Dorsolateral prefrontal cortex (tissue), 120 donors: ENCODE measurements at regions of chr10 and their contacts with region 1.

Region 1: GRCh38 chr10:95561182-95562075 is at the start of gene SORBS1:
- DNase-seq: peak; percentile 94 to 98 (median 97)
- H3K4me3 ChIP-seq: peak within 1 kb of the TSS; percentile 47 to 97 (median 89)
- H3K27ac ChIP-seq: peak within 1 kb of the TSS; percentile 58 to 96 (median 90)
- H3K27me3 ChIP-seq: no peaks in the 10 kb centered on the region
- CTCF ChIP-seq: peak in 20 of 56 donors; percentile 9 to 42 (median 23)
- total RNA-seq, gene SORBS1: 191 to 480 (median 308) TPM

Region 2: GRCh38 chr10:95430231-95430951 is 131.0 kb before region 1 on chr10:
- intact Hi-C with region 1: loop called (anchors 2 to 10 kb)
- DNase-seq: peak in 1 of 10 donors; percentile 67
- H3K4me3 ChIP-seq: no peak overlapping the region
- H3K27ac ChIP-seq: peak overlapping the region in 42 of 59 donors; percentile 1 to 87 (median 60)
- H3K27me3 ChIP-seq: peaks cover 0 to 7% (median 0%) of the 10 kb centered on the region in 45 donors
- CTCF ChIP-seq: peak; percentile 89 to 99 (median 96)

Region 3: DNA sequence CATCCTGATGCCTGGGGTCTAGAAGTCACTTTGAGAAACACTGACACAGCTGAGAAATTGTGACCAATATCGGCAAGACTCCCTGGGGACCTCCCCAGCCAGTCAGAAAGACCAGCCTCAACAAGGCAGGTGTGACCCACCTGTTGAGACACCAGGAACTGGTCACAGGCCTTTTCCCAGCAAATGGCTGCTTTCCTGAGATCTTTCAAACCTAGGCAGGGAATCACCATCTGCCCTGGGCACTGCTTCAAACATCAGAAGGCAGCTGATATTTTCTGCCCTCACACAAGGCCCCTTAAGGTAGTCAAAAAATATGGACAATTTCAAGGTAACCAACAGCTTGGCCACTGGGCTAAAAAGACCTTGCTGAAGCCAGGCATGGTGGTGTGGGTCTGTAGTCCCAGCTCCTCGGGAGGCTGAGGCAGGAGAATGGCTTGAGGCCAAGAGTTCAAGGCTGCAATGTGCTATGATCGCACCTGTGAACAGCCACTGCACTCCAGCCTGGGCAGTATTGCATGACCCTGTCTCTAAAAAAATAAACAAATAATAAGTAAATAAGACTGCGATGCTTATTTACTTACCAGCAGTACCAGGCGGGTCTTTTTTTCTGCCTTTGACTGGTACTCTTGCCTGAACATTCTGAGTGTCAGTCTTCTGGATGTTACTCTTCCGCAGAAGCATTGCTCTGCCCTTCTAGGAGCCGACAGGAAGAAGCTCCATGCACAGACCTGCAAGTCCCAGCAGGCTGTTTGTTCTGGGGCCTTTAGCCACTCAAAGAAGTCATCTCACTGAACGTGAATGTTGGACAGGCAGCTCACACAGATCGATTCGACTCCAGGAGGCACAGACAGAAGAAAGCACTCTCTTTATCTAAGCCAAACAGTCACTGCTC is 60.0 kb before region 1 on chr10:
- intact Hi-C with region 1: no loop called
- DNase-seq: peak in 1 of 10 donors; percentile 34
- H3K4me3 ChIP-seq: peak overlapping the region in 4 of 59 donors; percentile 2 to 12 (median 8)
- H3K27ac ChIP-seq: peak overlapping the region in 57 of 59 donors; percentile 1 to 94 (median 67)
- H3K27me3 ChIP-seq: no peaks in the 10 kb centered on the region
- CTCF ChIP-seq: no peak

Region 4: GRCh38 chr10:95513941-95514392 is 47.5 kb before region 1 on chr10:
- intact Hi-C with region 1: loop called in 1 of 2 experiments (anchors 5 kb)
- DNase-seq: peak in 9 of 10 donors; percentile 40 to 83 (median 72)
- H3K4me3 ChIP-seq: peak overlapping the region in 11 of 59 donors; percentile 2 to 31 (median 15)
- H3K27ac ChIP-seq: peak overlapping the region; percentile 42 to 94 (median 81)
- H3K27me3 ChIP-seq: no peaks in the 10 kb centered on the region
- CTCF ChIP-seq: peak in 3 of 56 donors; percentile 9 to 41 (median 13)

Region 5: DNA sequence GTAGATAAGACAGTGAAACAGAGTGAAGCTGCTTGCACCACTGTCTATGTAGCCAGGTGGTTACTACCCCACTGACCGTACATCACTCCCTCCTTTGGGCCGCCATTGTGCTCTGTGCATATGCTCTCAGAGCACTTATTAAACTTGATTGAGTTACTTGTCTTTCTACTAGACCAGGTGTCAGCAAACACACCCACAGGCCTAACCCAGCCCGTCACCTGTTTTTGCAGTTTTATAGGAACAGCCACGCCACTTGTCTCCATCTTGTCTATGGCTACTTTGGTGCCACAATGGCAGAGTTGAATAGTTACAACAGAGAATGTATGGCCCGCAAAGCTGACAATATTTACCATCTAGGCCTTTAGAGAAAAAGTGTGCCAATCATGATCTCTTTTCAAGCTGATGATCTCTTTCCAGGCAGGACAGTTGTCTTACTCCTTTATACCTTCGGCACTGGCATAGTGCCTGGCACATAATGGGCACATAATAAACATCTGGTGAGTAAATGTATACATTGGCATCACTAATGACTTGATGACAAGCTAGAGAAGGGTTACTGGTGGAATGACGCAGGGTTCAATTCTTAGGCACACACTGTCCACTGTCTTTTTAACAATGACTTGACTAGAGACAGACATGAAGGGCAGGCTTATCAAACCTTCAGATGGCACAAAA is 36.9 kb before region 1 on chr10:
- intact Hi-C with region 1: loop called in 1 of 2 experiments (anchors 5 kb)
- DNase-seq: no peak
- H3K4me3 ChIP-seq: no peak overlapping the region
- H3K27ac ChIP-seq: peak overlapping the region in 21 of 59 donors; percentile 10 to 90 (median 30)
- H3K27me3 ChIP-seq: no peaks in the 10 kb centered on the region
- CTCF ChIP-seq: no peak

Region 6: GRCh38 chr10:95572131-95572820 is 10.8 kb after region 1 on chr10:
- intact Hi-C with region 1: no loop called
- DNase-seq: no peak
- H3K4me3 ChIP-seq: peak overlapping the region in 35 of 59 donors; percentile 1 to 52 (median 27)
- H3K27ac ChIP-seq: peak overlapping the region in 55 of 59 donors; percentile 3 to 88 (median 65)
- H3K27me3 ChIP-seq: peaks cover 0 to 3% (median 0%) of the 10 kb centered on the region in 45 donors
- CTCF ChIP-seq: no peak

Region 7: DNA sequence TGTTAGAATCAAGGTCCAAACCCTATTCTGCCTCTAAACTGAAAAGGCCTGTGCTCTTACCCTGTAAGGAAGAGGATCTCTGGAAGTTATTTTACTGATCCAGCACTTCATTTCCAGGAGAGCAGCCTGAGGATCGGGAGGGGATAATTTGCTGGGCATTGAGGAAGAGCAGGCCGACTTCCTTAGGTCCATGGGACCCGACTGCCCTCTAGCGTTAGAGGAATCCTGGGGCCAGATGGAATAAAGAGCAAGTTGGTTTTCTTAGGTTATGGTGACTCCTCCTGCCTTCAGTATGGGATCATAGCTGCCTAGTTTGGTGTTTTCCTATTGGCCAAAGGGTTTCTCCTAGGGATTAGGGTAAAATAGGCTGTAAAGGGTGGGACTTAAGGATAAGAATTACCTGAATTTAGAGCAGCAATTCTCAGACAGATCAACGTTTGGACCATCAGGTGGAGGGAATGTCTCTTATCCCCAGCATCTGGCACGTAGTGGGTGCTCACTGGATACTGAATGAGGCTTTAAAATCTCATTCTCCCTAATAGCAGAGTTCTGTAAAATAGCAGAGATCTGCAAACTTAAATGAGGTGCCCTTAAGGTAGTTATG is 39.8 kb after region 1 on chr10:
- intact Hi-C with region 1: loop called (anchors 5 kb)
- DNase-seq: peak; percentile 47 to 86 (median 74)
- H3K4me3 ChIP-seq: no peak overlapping the region
- H3K27ac ChIP-seq: peak overlapping the region in 1 of 59 donors; percentile 5
- H3K27me3 ChIP-seq: peaks cover 0 to 8% (median 0%) of the 10 kb centered on the region in 45 donors
- CTCF ChIP-seq: peak; percentile 82 to 99 (median 95)